ENCODE measurements at regions of chr12 and their contacts with region 1.

Region 1: DNA sequence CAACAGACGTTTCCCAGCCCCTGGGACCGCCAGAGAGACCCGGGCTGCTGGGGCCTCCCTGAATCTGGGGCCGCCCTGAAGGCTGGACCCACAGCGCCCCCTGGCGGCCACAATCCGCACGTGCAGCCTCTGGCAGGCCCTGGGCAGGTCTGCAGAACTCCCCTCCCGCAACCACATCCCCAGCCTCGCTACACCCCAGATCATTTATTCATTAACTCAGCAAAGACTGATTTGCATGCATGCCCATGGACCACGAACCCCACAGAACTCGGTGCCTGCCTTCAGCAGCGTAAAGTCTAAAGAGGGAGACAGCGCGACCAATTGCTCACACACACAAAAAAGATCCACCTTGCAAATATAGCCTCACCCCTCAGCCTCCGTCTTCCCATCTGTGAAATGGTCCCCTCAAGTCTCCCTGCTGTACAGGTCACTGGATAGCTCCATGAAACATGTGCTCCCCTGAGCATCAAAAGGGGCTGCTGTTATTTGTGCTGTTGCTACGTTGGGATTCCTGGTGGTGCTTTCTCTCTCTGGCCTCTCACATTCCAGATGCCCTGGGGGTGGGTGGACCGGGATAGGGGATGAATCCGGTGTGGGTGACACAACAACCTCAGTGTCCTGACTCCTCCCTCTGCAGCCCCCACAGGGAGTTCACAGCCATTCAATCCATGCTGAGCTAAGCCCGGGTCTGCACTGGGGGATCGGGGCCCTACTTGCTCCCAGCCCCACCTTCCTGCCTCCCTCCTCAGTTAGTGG is 96.4 kb downstream of the SCARB1 start:
- DNase-seq: peak; percentile 95
- H3K4me3 ChIP-seq: no peak overlapping the region
- H3K27ac ChIP-seq: peak overlapping the region; percentile 80 to 89 (median 88)
- H3K4me1 ChIP-seq: peaks cover 41 to 54% (median 51%) of the 10 kb centered on the region in 4 donors
- H3K27me3 ChIP-seq: peaks cover 0 to under 1% (median 0%) of the 10 kb centered on the region in 4 donors
- CTCF ChIP-seq: peak in 2 of 3 experiments; percentile 99 to 100
- EP300 ChIP-seq: no peak
- POLR2A ChIP-seq: no peak

Region 2: GRCh38 chr12:124053851-124054250 is 713.4 kb before region 1 on chr12:
- intact Hi-C with region 1: loop called (anchors 5 kb)
- DNase-seq: no peak
- H3K4me3 ChIP-seq: no peak overlapping the region
- H3K27ac ChIP-seq: no peak overlapping the region
- H3K4me1 ChIP-seq: peaks cover 0 to 9% (median 8%) of the 10 kb centered on the region in 4 donors
- H3K27me3 ChIP-seq: no peaks in the 10 kb centered on the region
- CTCF ChIP-seq: peak; percentile 63 to 78 (median 64)
- EP300 ChIP-seq: no peak
- POLR2A ChIP-seq: no peak

Region 3: DNA sequence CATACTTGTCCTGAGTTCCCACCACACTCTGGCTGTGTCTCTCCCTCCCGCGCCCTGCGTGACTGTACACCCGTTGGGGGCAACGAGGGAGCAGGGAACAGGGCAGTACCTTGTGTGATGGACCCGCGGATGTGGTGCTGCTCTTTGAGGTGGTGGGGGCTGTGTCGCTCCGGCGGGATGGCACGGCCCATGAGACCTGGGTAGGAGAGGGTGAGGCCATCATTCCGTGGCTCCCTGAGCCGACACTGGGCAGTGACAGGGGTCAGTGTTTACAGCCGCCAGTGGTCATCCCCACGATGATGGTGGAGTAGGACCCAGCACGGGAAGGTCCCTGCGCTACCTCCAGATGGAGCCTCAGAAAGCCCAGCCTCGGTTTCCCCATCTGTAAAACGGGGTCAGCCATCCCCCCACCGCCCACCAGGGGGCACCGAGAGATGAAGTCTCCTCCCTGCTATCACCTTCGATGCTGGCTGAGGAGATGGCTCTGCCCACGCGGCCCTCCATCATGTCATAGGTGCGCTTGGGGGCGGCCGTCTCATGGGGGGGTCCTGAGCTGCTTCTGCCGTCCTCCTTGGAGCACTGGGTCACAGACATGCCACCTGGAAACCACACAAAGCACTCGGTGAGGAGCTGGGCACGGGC is 419.4 kb before region 1 on chr12:
- intact Hi-C with region 1: loop called (anchors 5 kb)
- DNase-seq: no peak
- H3K4me3 ChIP-seq: no peak overlapping the region
- H3K27ac ChIP-seq: no peak overlapping the region
- H3K4me1 ChIP-seq: peaks cover 5 to 20% (median 10%) of the 10 kb centered on the region in 4 donors
- H3K27me3 ChIP-seq: no peaks in the 10 kb centered on the region
- CTCF ChIP-seq: peak; percentile 48 to 59 (median 49)
- EP300 ChIP-seq: no peak
- POLR2A ChIP-seq: no peak

Region 4: DNA sequence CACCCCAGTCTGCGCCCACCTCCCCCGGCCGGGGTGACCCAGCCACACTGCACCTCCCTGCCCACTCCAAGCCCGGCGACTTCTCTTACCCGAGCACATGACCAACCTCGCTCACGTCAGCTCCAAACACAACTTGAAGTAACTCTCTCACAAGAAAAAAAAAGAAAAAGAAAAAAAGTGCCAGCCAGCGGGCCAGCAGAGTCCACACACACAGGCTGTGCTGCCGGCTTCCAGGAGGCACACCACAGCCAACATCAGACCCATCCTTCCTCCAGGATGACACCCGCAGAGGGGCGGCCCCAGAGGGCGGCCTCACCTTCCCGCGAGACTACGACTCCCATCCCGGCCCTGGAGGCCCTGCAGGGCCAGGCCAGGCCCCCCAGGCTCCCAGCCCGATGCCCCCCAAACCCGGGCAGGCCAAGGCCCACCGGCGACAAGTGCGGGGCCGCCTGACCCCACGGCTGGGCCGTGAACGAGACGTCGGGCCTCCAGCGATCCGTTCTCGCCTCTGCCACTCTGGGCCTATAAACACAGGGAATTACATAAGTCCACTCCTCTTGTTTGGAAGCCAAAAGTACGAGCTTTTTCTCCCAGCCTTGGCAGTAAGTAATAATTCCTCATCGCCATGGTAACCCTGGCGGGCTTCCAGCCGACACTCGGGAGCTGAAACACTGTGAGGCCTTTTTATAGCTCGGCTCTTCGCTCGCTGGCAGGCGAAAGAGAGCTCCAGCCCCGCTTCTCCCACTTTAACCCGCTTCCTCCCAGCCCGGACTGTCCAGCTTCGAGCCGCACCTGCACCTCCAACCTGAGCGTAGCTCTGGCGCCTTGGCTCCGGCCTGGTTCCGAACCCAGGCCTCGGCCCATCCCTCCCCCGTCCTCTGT is 249.0 kb before region 1 on chr12:
- intact Hi-C with region 1: loop called (anchors 10 kb)
- DNase-seq: peak; percentile 100
- H3K4me3 ChIP-seq: peak overlapping the region; percentile 55 to 60 (median 58)
- H3K27ac ChIP-seq: peak overlapping the region; percentile 96 to 98 (median 97)
- H3K4me1 ChIP-seq: peaks cover 93 to 100% (median 96%) of the 10 kb centered on the region in 4 donors
- H3K27me3 ChIP-seq: no peaks in the 10 kb centered on the region
- CTCF ChIP-seq: no peak
- EP300 ChIP-seq: no peak
- POLR2A ChIP-seq: no peak

Region 5: DNA sequence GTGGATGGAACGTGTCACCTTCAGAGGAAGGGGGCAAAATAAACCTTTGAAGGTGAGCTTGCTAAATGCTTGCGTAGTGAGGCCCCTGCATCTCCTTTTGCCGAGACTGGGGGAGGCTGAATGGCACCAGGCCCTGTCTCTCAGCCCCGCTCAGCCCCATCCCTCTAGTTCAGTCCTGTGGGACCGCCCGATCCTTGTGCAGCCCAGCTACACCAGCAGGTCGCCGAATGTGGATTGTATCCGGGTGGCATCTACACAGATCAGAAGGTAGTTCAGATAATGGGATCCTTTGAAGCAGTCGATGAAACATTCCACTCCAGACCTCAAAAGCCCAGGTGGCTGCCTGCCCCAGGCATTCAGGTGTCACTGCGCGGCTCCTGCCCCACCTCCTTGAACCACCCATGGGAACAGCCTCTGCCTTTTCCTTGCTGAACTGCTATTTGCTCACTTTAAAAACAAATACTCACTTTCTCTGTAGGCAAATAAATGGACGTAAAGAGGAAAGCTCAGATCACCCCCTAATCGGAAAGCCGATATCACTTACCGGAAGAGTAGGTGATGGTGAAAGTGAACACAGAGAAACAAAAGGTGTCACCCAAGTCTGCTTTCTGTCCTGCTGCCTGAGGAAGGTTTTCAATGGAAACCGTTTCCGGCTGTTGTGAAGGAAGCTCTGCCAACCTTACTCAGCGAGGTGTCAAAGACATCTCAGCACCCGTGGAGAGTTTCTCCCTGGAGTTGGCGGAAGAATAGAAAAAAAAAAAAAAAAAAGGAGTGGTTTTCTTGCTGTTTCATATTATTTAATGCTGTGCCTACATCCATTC is 99.5 kb before region 1 on chr12:
- intact Hi-C with region 1: loop called (anchors 5 kb)
- DNase-seq: no peak
- H3K4me3 ChIP-seq: no peak overlapping the region
- H3K27ac ChIP-seq: peak overlapping the region; percentile 25 to 73 (median 46)
- H3K4me1 ChIP-seq: peaks cover 11 to 29% (median 25%) of the 10 kb centered on the region in 4 donors
- H3K27me3 ChIP-seq: no peaks in the 10 kb centered on the region
- CTCF ChIP-seq: peak in 1 of 3 experiments; percentile 12
- EP300 ChIP-seq: no peak
- POLR2A ChIP-seq: no peak

Measured in esophagus muscularis mucosa (tissue), 4 donors.